ENCODE measurements at regions of chr7 and their contacts with region 1.

Region 1: GRCh38 chr7:130668257-130669084 is at the start of gene COPG2:
- DNase-seq: peak; percentile 87
- ATAC-seq: peak; percentile 93
- H3K4me3 Mint-ChIP-seq: peak within 1 kb of the TSS; percentile 89
- H3K27ac Mint-ChIP-seq: peak within 1 kb of the TSS; percentile 75
- H3K4me1 Mint-ChIP-seq: peaks cover 11% of the 10 kb centered on the region
- H3K27me3 Mint-ChIP-seq: peaks cover 3% of the 10 kb centered on the region
- CTCF ChIP-seq: no peak
- total RNA-seq, gene COPG2: 15.3 and 15.4 TPM in 2 replicates

Region 2: DNA sequence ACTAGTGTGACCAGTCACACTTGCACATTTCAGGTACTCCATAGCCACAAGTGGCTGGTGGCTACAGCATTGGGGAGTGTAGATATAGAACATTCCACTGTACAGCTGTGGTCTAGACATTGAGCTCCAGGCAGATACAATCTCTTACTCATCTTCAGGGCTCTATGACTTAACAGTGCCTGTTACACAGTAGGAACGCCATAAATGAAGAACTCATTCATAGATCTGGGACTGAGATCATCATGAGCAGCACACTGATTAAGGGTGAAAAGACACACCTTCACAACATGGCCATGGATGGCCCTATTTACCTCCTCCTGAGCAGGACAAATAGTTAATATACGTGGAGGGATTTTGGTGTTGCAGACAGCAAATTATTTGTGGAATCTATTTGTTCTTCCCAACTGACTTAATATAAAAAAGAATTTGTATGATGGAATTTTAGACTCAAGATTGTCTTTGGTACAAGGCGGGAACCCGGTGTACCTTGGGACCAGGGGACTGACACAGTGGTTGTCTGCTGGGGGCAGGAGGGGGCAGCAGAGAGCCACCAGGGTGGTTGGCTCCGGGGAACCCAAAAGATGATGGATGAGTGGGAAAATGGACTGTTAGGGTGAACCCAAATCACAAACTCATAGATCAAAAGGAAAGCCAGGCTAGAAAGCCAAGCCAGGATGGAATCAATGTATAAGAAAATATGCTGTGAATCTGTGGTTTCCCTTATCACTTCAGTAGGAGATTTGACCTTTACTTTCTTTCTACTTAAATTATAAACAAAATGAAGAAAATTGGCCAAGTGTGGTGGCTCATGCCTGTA is 426.1 kb before region 1 on chr7:
- CTCF ChIA-PET with region 1: no interaction called
- POLR2A ChIA-PET with region 1: interaction called, 10 read pairs
- intact Hi-C with region 1: no loop called
- DNase-seq: no peak
- ATAC-seq: no peak
- H3K4me3 Mint-ChIP-seq: no peak overlapping the region
- H3K27ac Mint-ChIP-seq: no peak overlapping the region
- H3K4me1 Mint-ChIP-seq: peaks cover 9% of the 10 kb centered on the region
- H3K27me3 Mint-ChIP-seq: peaks cover 5% of the 10 kb centered on the region
- CTCF ChIP-seq: no peak

Region 3: GRCh38 chr7:130297628-130298543 is 370.6 kb before region 1 on chr7:
- CTCF ChIA-PET with region 1: no interaction called
- POLR2A ChIA-PET with region 1: no interaction called
- intact Hi-C with region 1: no loop called
- DNase-seq: no peak
- ATAC-seq: no peak
- H3K4me3 Mint-ChIP-seq: no peak overlapping the region
- H3K27ac Mint-ChIP-seq: no peak overlapping the region
- H3K4me1 Mint-ChIP-seq: peaks cover 10% of the 10 kb centered on the region
- H3K27me3 Mint-ChIP-seq: peaks cover 3% of the 10 kb centered on the region
- CTCF ChIP-seq: no peak

Region 4: DNA sequence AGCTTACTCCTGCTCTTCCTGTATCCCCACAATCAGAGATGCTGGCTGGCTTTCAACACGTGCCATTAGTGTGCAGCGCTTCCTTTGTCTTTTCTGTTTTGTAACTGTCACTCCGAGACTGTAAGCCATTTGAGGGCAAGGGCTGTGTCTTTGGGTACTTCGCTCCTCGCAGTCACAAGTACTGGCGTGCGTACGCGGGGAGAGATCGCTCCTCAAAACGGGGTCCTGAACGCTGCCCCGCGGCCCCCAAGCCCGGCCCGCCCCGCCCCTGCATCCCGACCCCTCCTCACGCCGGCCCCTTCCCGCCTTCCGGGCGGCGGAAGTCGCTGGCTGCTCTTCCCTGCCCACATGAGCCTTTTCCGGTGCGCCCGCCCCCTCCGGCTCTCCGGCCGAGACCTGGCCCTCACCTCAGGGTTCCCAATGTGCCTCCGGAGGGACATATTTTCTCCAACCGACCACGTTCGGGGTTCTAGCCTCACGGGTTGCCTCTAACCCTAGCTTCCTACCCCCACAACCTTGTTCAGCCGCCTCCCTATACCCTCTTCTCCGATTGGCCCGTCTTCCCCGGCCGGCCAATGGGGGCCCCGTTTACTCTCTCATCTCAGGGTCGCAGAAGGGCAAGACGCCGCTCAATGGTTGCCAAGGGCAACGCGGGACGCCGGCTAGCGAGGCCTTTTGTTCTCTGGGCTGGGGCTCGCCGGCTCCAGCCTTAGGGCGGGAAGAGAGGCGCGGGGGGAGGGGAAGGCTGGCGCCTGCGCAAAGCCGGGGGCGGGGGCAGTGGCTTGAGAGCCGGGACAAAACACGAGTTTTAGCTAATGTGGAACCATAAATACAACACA is 227.7 kb before region 1 on chr7 and contains the start of gene CEP41:
- CTCF ChIA-PET with region 1: no interaction called
- POLR2A ChIA-PET with region 1: no interaction called
- intact Hi-C with region 1: loop called (anchors 1 kb)
- DNase-seq: peak; percentile 89
- ATAC-seq: peak; percentile 97
- H3K4me3 Mint-ChIP-seq: peak within 1 kb of the TSS; percentile 99
- H3K27ac Mint-ChIP-seq: peak within 1 kb of the TSS; percentile 95
- H3K4me1 Mint-ChIP-seq: peaks cover 14% of the 10 kb centered on the region
- H3K27me3 Mint-ChIP-seq: peaks cover 5% of the 10 kb centered on the region
- CTCF ChIP-seq: no peak
- total RNA-seq, gene CEP41: 5.1 and 6.6 TPM in 2 replicates

Region 5: DNA sequence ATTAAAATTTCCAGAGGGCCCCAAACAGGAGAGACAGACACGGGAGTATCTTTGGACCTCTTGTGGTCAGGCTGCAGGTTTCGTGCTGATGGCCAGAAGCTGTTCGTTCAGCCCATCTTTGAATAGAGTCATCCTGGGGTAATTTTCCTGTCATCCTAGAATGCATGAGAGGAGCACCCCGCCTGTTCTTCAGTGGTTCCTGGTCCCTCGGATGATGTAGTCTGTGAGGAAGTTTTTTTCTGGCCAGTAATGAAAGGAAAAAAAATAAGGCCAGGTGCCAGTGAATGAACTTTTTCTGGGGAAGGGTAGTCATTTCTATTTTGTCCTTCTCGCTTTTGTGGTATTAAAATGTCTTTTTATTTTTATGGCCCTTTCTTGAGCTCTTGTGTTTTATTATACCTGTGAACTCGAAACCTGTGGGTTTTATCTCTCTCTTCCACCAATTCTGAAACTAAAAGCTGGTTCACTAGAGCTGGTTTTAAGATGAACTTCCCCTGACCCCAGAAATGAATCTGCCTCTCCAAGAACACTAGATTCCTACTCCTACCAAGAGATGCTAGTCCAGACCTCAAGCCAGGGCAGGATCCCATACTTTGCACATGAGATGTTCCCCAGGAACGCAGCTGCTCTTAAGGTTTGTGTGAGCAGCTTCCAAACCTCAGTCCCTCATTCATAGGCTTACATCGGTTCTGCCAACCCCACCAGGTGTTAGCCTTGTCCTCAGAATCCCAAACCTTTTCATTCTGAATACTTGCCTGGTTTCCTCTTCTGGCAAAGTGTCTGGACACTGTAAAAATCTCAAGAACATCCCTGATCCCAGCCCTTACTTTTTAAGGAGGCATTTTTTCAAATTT is 191.9 kb before region 1 on chr7:
- CTCF ChIA-PET with region 1: no interaction called
- POLR2A ChIA-PET with region 1: no interaction called
- intact Hi-C with region 1: no loop called
- DNase-seq: no peak
- ATAC-seq: no peak
- H3K4me3 Mint-ChIP-seq: no peak overlapping the region
- H3K27ac Mint-ChIP-seq: no peak overlapping the region
- H3K4me1 Mint-ChIP-seq: peaks cover 12% of the 10 kb centered on the region
- H3K27me3 Mint-ChIP-seq: peaks cover 6% of the 10 kb centered on the region
- CTCF ChIP-seq: no peak

Region 6: DNA sequence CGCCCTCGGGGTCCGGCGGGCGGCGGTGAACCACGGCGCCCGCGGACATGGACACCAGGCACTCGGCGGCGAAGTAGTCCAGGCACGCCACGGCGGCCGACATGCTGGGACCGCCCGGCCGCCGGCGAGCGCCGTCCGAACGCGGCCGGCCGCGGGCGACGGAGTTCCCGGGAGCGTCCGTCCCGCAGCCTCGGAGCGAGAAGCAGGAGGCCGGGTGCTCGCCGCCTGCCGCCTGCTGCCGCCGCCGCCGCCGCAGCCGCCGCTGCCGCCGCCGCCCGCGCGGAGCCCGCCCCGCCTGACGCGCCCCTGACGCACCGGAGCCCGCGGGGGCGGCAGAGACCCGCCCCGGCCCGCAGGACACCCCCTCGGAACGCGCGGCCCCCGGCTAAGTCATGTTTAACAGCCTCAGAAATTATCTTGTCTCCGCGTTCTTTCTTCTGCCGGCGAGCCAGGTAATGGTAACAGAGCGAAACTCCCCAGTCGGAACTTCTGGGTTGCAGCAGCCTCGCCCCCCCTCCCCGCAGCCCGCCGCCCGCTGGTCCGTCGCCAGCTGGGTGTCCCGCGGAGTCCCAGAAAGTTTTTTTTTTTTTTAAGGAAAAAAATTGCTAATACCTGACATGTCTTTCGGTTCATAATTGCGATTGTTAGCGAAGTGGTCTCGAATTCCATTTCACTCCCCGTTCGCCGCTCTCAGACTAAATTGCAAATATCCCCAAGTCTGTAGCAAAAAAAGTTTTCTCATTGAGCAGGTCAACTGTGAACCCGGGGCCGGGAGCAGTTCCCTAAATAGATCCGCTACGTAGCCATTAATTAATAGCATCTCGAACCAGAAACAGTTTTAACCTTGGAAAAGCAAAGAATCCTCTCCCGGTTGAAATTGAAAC is 65.7 kb after region 1 on chr7 and contains the start of gene KLF14:
- CTCF ChIA-PET with region 1: no interaction called
- POLR2A ChIA-PET with region 1: no interaction called
- intact Hi-C with region 1: loop called (anchors 2 kb)
- DNase-seq: peak; percentile 58
- ATAC-seq: peak; percentile 69
- H3K4me3 Mint-ChIP-seq: peak within 1 kb of the TSS; percentile 86
- H3K27ac Mint-ChIP-seq: peak within 1 kb of the TSS; percentile 69
- H3K4me1 Mint-ChIP-seq: peaks cover 7% of the 10 kb centered on the region
- H3K27me3 Mint-ChIP-seq: peaks cover 59% of the 10 kb centered on the region
- CTCF ChIP-seq: no peak
- total RNA-seq, gene KLF14: 0.10 TPM in 1 of 2 replicates, not detected in the other

Region 7: GRCh38 chr7:130966246-130967009 is 298.0 kb after region 1 on chr7:
- CTCF ChIA-PET with region 1: no interaction called
- POLR2A ChIA-PET with region 1: no interaction called
- intact Hi-C with region 1: loop called (anchors 5 kb)
- DNase-seq: no peak
- ATAC-seq: no peak
- H3K4me3 Mint-ChIP-seq: no peak overlapping the region
- H3K27ac Mint-ChIP-seq: peak overlapping the region; percentile 74
- H3K4me1 Mint-ChIP-seq: peaks cover 65% of the 10 kb centered on the region
- H3K27me3 Mint-ChIP-seq: no peaks in the 10 kb centered on the region
- CTCF ChIP-seq: no peak

Region 8: GRCh38 chr7:131327626-131328376 is 659.3 kb after region 1 on chr7 and contains the start of gene MKLN1:
- CTCF ChIA-PET with region 1: no interaction called
- POLR2A ChIA-PET with region 1: no interaction called
- intact Hi-C with region 1: loop called (anchors 2 kb)
- DNase-seq: peak; percentile 85
- ATAC-seq: peak; percentile 96
- H3K4me3 Mint-ChIP-seq: peak within 1 kb of the TSS; percentile 98
- H3K27ac Mint-ChIP-seq: peak within 1 kb of the TSS; percentile 95
- H3K4me1 Mint-ChIP-seq: peaks cover 57% of the 10 kb centered on the region
- H3K27me3 Mint-ChIP-seq: no peaks in the 10 kb centered on the region
- CTCF ChIP-seq: no peak
- total RNA-seq, gene MKLN1: 48.9 and 64.6 TPM in 2 replicates

Measured in activated B cell treated with CpG ODN at 0.5 μM for 24 hours (primary cell).